ENCODE measurements at regions of chr17 and their contacts with region 1.

Region 1: DNA sequence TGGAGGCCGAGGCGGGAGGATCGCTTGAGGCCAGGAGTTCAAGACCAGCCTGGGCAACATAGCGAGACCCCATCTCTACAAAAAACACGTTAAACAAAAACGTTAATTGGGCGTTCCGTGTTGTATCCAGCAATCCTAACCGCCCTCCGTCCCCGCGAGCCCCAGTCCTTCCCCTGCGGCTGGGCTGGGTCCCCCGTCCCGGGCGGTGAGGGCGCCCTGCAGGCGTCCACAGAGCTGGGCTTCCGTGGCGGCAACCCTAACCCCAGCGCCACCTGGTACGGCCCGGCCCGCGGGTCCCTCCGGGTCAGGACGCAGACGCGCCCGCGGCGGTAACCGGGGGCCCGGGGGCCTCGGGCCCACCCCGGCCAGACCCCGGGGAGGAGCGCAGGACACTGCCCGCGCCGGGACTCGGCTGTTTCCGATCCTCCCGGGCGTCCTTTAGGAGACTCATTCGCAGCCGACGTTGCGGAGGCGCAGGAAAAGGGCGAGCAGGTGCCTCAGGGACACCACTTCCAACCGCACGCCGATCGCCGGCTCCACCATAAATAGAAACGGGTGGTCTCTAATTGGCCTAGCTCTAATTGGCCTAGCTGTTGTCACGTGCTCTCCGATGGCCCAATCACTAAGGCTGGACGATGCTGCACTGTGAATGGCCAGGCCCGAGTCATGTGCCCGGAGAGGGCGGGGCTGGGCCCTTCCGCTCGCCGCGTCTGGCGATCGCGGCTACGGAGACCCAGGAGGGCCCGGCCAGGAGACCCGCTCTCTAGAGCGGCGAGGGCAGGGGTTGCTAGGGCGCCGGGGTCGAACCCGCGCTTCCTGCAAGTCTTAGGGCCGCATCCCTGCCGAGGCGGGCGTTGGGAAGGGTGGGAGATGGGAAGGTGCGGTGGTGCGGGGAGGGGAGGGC is 19.0 kb upstream of the CSNK1D start:
- DNase-seq: peak; percentile 99 to 100
- ATAC-seq: peak; percentile 75 to 91
- H3K4me3 ChIP-seq: peak overlapping the region; percentile 93
- H3K27ac ChIP-seq: peak overlapping the region; percentile 96 to 98
- H3K4me1 ChIP-seq: peaks cover 64% of the 10 kb centered on the region
- CTCF ChIP-seq: no peak
- EP300 ChIP-seq: no peak
- POLR2A ChIP-seq: peak; percentile 95
- RAD21 ChIP-seq: peak in 1 of 2 experiments; percentile 13; a peak in 3 of 5 replicates

Region 2: GRCh38 chr17:82193520-82194220 is 98.8 kb before region 1 on chr17:
- CTCF ChIA-PET with region 1: no interaction called
- POLR2A ChIA-PET with region 1: no interaction called
- DNase-seq: no peak
- ATAC-seq: no peak
- H3K4me3 ChIP-seq: no peak overlapping the region
- H3K27ac ChIP-seq: no peak overlapping the region
- H3K4me1 ChIP-seq: no peaks in the 10 kb centered on the region
- CTCF ChIP-seq: no peak
- EP300 ChIP-seq: no peak
- POLR2A ChIP-seq: no peak
- RAD21 ChIP-seq: no peak

Region 3: GRCh38 chr17:82267575-82268379 is 24.7 kb before region 1 on chr17:
- CTCF ChIA-PET with region 1: interaction called, 6 read pairs
- POLR2A ChIA-PET with region 1: interaction called, 36 read pairs
- DNase-seq: peak; percentile 94 to 97
- ATAC-seq: peak; percentile 93 to 94
- H3K4me3 ChIP-seq: peak overlapping the region; percentile 35
- H3K27ac ChIP-seq: peak overlapping the region; percentile 89 to 91
- H3K4me1 ChIP-seq: peaks cover 68% of the 10 kb centered on the region
- CTCF ChIP-seq: no peak
- EP300 ChIP-seq: peak in 1 of 2 experiments; percentile 54; a peak in 1 of 5 replicates
- POLR2A ChIP-seq: no peak
- RAD21 ChIP-seq: peak; percentile 29 to 43; a peak in 1 of 5 replicates

Region 4: DNA sequence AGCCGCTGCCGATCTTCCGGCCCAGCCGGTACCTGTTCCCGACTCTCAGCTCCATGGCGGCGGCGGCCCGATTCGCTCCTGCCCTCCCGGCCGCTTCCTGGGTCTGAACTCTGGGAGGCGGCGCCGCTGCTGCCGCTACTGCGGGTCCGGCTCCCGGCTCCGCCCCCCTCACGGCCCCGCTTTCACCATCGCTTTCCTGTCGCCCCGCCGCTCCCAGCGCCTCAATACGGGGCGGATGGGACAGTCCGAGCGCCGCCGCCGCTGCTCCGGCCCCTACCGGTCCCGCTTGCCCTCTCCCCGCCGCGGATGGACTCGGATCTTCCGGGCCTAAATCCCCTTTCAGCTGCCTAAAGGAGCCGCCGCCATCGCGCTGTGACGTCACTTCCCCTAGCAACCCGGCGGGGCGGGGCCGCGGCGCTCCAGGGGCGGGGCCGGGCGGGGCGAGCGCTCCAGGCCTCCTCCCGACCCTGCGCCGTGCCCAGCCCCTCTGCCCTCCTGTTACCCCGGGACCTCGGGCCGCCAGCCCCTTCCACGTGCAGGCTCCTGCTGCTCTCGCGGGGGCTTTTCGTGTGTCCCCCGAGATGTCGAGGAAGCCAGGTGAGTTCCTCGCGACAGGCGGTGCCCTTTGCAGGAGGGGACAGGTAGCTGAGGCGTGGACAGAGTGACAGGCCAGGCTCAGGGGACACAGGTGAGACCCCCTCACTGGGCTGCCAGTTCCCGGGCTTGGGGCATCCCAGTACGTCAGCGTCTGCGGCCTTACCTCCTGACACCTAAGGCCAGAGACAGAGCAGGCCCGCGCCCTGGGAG is 19.0 kb before region 1 on chr17 and contains the start of gene CSNK1D:
- CTCF ChIA-PET with region 1: interaction called, 6 read pairs
- POLR2A ChIA-PET with region 1: interaction called, 36 read pairs
- DNase-seq: peak; percentile 90 to 94
- ATAC-seq: peak; percentile 82 to 87
- H3K4me3 ChIP-seq: peak within 1 kb of the TSS; percentile 97
- H3K27ac ChIP-seq: peak within 1 kb of the TSS; percentile 99 to 100
- H3K4me1 ChIP-seq: peaks cover 47% of the 10 kb centered on the region
- CTCF ChIP-seq: no peak
- EP300 ChIP-seq: no peak
- POLR2A ChIP-seq: peak; percentile 63
- RAD21 ChIP-seq: no peak
- polyA plus RNA-seq, gene CSNK1D: 130 and 139 TPM in 2 replicates

Region 5: DNA sequence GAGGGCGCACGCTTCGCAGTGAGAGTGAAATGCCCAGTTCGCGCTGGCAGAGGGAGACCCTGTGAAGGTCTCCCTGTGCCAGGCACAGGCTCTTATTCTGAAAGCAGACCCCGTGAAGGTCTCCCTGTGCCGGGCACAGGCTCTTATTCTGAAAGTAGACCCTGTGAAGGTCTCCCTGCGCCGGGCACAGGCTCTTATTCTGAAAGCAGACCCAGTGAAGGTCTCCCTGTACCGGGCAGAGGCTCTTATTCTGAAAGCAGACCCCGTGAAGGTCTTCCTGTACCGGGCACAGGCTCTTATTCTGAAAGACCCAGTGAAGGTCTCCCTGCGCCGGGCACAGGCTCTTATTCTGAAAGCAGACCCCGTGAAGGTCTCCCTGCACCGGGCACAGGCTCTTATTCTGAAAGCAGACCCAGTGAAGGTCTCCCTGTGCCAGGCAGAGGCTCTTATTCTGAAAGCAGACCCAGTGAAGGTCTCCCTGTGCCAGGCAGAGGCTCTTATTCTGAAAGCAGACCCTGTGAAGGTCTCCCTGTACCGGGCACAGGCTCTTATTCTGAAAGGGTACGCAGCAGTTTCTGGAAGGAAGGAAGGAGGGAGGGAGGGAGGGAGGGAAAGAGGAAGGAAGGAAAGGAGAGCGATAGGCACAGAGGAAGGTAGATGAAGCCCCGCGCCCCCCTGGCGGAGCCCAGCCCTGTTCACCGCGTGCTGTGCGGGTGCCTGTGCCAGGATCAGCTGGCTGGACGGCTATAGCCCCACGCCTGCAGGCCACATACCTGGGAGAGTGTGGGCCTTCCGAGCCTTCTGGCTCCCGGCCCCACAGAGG is 300.5 kb after region 1 on chr17:
- CTCF ChIA-PET with region 1: no interaction called
- POLR2A ChIA-PET with region 1: no interaction called
- DNase-seq: peak; percentile 65 to 81
- ATAC-seq: peak; percentile 51 to 67
- H3K4me3 ChIP-seq: peak overlapping the region; percentile 54
- H3K27ac ChIP-seq: peak overlapping the region; percentile 86 to 93
- H3K4me1 ChIP-seq: peaks cover 26% of the 10 kb centered on the region
- CTCF ChIP-seq: no peak
- EP300 ChIP-seq: peak in 1 of 2 experiments; percentile 17; a peak in 1 of 5 replicates
- POLR2A ChIP-seq: peak; percentile 41
- RAD21 ChIP-seq: no peak; a peak in 1 of 5 replicates

Measured in A549 (cell line).